Naive thymus-derived CD4-positive, alpha-beta T cell (primary cell): ENCODE measurements at regions of chr11 and their contacts with region 1.

Region 1: DNA sequence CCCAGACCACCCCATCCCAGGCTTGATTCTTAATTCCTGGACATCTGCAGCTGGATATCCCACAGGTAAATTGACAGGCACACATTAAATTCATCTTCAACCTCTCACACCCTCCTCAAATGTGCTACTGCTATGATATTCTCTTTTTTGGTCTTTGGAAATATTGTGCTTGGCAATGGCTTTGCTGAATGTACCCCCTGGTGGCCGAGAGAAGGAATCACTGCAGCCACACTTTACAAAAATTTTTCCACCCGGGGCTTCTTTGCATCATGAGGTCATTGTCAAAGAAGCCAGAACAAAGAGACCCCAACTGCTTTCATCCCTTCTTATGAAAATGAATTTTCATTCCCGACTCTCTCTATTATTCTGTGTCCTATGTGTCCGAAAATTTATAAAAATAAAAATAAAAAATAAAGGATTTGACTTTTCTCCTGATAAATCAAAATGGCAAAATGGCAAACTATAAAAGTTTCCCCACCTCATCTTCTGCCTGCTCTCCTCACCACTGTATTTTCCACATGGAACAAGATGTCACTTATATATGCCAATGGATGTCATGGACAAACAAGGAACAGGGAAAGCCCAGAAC is 15.0 kb upstream of the CYB5R2 start:
- DNase-seq: peak in 5 of 9 donors; percentile 8 to 31 (median 22)
- ATAC-seq: peak; percentile 55
- H3K4me3 ChIP-seq: no peak overlapping the region
- H3K4me3 Mint-ChIP-seq: no peak overlapping the region
- H3K27ac ChIP-seq: no peak overlapping the region
- H3K27ac Mint-ChIP-seq: no peak overlapping the region
- H3K4me1 ChIP-seq: no peaks in the 10 kb centered on the region
- H3K4me1 Mint-ChIP-seq: peaks cover 0 to 2% (median 0%) of the 10 kb centered on the region in 7 donors
- H3K27me3 ChIP-seq: no peaks in the 10 kb centered on the region
- H3K27me3 Mint-ChIP-seq: peaks cover 25 to 42% (median 32%) of the 10 kb centered on the region in 5 donors

Region 2: DNA sequence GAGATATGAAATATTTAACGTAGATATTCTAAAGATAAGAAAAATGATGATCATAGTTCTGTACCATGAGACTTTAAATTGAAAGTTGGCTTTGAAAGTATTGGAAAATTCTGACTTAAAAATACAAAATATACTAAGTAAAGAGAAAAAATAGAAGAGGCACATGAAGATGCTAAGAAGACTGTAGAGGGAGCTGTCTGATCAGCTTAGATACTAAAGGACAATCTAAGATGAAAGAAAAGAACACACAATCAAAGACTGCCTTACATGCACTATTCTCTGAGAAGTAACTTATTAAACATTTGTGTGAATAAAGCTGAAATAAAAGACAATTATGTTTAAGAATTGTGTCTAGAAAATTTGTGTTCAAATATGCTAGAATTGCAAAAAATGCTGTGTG is 544.4 kb before region 1 on chr11:
- CTCF ChIA-PET with region 1: interaction called, 3 read pairs
- POLR2A ChIA-PET with region 1: no interaction called
- intact Hi-C with region 1: loop called in 1 of 2 experiments (anchors 1 kb)
- DNase-seq: no peak
- ATAC-seq: no peak
- H3K4me3 ChIP-seq: no peak overlapping the region
- H3K4me3 Mint-ChIP-seq: no peak overlapping the region
- H3K27ac ChIP-seq: no peak overlapping the region
- H3K27ac Mint-ChIP-seq: no peak overlapping the region
- H3K4me1 ChIP-seq: no peaks in the 10 kb centered on the region
- H3K4me1 Mint-ChIP-seq: no peaks in the 10 kb centered on the region
- H3K27me3 ChIP-seq: no peaks in the 10 kb centered on the region
- H3K27me3 Mint-ChIP-seq: peaks cover 0 to 24% (median 11%) of the 10 kb centered on the region in 5 donors

Region 3: GRCh38 chr11:7353100-7353499 is 335.2 kb before region 1 on chr11:
- CTCF ChIA-PET with region 1: interaction called, 5 read pairs
- POLR2A ChIA-PET with region 1: no interaction called
- intact Hi-C with region 1: loop called (anchors 1 to 5 kb)
- DNase-seq: peak in 2 of 9 donors; percentile 8 to 21
- ATAC-seq: peak; percentile 54
- H3K4me3 ChIP-seq: no peak overlapping the region
- H3K4me3 Mint-ChIP-seq: no peak overlapping the region
- H3K27ac ChIP-seq: no peak overlapping the region
- H3K27ac Mint-ChIP-seq: no peak overlapping the region
- H3K4me1 ChIP-seq: no peaks in the 10 kb centered on the region
- H3K4me1 Mint-ChIP-seq: no peaks in the 10 kb centered on the region
- H3K27me3 ChIP-seq: no peaks in the 10 kb centered on the region
- H3K27me3 Mint-ChIP-seq: peaks cover 0 to 28% (median 20%) of the 10 kb centered on the region in 5 donors

Region 4: GRCh38 chr11:7571640-7572000 is 116.7 kb before region 1 on chr11:
- CTCF ChIA-PET with region 1: no interaction called
- POLR2A ChIA-PET with region 1: no interaction called
- intact Hi-C with region 1: loop called in 1 of 2 experiments (anchors 10 kb)
- DNase-seq: no peak
- ATAC-seq: peak; percentile 49
- H3K4me3 ChIP-seq: no peak overlapping the region
- H3K4me3 Mint-ChIP-seq: no peak overlapping the region
- H3K27ac ChIP-seq: no peak overlapping the region
- H3K27ac Mint-ChIP-seq: no peak overlapping the region
- H3K4me1 ChIP-seq: peaks cover 0 to 11% of the 10 kb centered on the region in 2 donors
- H3K4me1 Mint-ChIP-seq: peaks cover 8 to 39% (median 25%) of the 10 kb centered on the region in 7 donors
- H3K27me3 ChIP-seq: peaks cover 0 to 6% of the 10 kb centered on the region in 2 donors
- H3K27me3 Mint-ChIP-seq: peaks cover 0 to 58% (median 0%) of the 10 kb centered on the region in 5 donors

Region 5: DNA sequence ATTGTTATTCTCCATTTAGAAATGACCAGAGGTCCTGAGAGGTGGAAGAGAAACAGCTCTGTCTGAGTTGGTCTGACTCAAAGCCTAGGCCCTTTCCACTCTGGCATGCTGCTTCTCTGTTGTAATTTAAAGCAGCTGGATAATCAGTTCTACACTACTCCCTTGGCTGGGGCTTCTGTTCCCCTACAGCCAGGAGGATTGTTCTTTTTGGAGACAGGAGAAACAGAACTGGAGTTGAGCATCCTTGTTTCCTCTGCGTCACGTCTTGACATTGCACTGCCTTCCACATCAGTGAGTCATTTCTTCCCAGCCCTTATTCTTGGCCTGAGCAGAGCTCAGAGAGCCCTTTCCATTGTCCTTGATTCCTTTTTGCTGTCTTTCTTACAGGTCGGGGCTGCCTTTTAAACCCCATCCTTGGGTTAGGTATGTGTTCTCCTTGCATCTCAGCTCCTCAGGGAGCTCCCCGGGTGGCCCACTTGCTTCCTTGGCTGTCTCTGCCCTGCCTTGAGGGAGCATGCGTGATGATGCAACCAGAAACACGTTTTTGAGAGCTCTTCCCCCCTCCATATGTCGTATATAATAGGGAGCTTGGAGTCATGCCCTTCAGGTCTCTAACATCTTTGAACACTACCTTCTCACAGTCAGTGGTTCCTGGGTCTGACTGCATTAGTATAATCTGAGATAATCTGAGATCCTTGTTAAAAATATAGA is 50.7 kb before region 1 on chr11:
- CTCF ChIA-PET with region 1: no interaction called
- POLR2A ChIA-PET with region 1: no interaction called
- intact Hi-C with region 1: no loop called
- DNase-seq: no peak
- ATAC-seq: no peak
- H3K4me3 ChIP-seq: no peak overlapping the region
- H3K4me3 Mint-ChIP-seq: no peak overlapping the region
- H3K27ac ChIP-seq: no peak overlapping the region
- H3K27ac Mint-ChIP-seq: no peak overlapping the region
- H3K4me1 ChIP-seq: no peaks in the 10 kb centered on the region
- H3K4me1 Mint-ChIP-seq: peaks cover 0 to 4% (median 0%) of the 10 kb centered on the region in 7 donors
- H3K27me3 ChIP-seq: no peaks in the 10 kb centered on the region
- H3K27me3 Mint-ChIP-seq: no peaks in the 10 kb centered on the region